ENCODE measurements at regions of chr6 and their contacts with region 1.

Region 1: DNA sequence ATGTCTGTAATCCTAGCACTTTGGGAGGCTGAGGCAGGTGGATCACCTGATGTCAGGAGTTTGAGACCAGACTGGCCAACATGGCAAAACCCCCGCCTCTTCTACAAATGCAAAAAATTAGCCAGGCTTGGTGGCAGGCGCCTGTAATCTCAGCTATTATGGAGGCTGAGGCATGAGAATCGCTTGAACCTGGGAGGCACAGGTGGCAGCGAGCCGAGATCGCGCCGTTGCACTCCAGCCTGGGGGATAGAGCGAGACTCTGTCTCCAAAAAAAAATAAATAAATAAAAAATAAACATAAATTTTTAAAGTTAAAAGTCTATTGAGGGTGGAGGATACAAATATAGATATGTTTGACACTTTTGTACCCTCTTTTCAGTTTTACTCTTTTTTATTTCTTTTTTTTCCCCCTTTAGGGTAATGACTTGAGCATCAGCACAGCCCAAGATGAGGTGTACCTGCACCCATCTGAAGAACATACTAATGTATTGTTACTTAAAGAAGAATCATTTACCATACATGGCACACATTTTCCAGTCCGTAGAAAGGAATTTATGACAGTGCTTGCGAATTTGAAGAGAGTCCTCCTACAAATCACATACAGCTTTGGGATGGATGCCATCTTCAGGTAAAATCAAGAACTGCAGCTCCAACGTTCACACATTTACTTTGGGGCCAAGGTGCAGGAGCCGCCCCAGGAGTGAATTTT is 368.9 kb downstream of the LAMA2 start:
- DNase-seq: no peak
- ATAC-seq: no peak

Region 2: DNA sequence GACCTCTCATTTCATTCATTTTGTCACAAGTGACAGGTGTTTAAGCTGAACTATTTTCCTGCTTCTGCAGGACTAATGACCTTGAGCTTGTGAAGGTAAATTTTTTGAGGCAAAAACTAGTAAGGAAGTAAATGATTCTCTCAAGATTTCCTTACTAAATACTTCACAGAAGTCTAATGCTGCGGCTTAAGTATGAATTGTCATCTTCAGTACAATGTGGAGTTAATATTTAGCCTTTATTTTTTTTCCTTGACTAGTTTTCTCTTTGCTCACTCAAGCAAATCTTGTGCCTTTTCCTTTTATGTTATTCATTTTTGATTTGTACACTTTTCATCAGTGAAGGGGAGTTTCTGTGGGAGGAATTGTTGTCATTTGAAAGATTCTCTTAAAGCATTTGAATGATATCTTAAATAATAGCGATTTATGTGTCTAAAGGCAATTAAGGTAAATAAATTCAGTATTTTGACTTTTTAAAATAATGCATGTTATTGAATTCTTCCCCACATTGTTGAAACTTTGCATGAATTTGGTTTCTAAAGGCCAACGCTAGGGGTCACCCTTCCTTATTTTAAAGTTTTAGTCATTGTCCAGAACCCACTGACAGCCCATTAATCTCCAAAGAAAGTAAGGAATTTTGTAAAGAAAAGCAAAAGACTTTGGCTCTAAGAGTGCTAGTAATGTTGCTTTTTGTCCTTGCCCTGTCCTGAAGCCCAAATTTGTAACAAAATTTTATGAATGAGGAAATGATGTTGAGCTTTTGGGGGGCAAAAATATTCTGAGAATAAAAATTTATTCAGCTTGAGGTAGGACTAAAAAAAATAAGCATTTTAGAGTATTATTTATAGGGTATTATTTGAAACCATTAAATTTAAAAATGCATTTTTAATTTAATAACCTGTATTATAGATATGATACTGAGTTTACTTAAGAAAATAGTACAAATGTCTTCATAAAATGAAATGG is 526.3 kb before region 1 on chr6:
- intact Hi-C with region 1: loop called (anchors 10 kb)
- DNase-seq: no peak
- ATAC-seq: no peak

Region 3: GRCh38 chr6:128882991-128883611 is 368.7 kb before region 1 on chr6 and contains the start of gene LAMA2:
- intact Hi-C with region 1: loop called (anchors 10 kb)
- DNase-seq: peak; percentile 94
- ATAC-seq: peak; percentile 99
- total RNA-seq, gene LAMA2: 119 TPM

Region 4: GRCh38 chr6:129120856-129121638 is 130.8 kb before region 1 on chr6:
- intact Hi-C with region 1: no loop called
- DNase-seq: no peak
- ATAC-seq: peak; percentile 50

Region 5: DNA sequence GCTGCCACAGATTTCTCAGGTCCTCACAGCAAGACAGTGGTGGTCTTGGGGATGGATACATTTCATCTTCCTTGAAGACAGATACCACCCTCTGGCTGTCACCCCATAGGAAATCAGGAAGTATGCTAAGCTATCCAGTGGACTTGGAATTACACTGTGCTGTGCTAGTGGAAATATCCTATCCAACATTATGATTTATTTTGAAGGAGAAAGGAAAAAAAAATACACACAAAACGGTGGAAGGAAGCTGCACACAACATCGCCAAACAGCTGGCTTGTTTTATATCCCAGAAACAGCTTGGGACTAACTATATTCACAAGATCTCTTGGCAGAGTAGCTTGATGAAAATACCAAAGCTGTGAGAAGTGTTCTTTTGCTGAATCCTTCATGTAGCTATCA is 111.3 kb before region 1 on chr6:
- intact Hi-C with region 1: loop called (anchors 5 kb)
- DNase-seq: no peak
- ATAC-seq: peak; percentile 70

Measured in Right ventricle myocardium inferior (tissue), 1 donor.